Heart right ventricle (tissue), 16 donors: ENCODE measurements at regions of chr3 and their contacts with region 1.

Region 1: DNA sequence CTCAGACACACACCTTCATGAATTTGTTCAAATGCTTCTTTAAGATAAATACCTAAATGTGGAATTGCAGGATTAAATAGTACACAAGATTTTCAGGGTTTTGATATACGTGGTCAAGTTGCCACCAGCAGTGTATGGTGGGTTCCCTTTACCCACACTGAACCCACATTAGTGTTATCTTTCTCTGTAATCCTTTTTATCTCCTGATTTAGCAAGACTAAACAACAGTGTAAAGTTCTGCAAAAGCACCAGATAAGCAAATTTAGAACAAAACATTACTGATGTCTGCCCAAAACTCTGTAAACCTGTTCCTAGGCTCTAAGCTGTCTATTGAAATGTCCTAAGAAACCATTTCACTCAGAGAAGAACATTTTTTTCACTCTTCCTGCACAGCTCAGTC is 352.9 kb downstream of the FHIT start:
- DNase-seq: no peak
- ATAC-seq: no peak
- H3K4me3 ChIP-seq: no peak overlapping the region
- H3K27ac ChIP-seq: no peak overlapping the region
- H3K4me1 ChIP-seq: no peaks in the 10 kb centered on the region
- H3K27me3 ChIP-seq: no peaks in the 10 kb centered on the region
- CTCF ChIP-seq: no peak

Region 2: DNA sequence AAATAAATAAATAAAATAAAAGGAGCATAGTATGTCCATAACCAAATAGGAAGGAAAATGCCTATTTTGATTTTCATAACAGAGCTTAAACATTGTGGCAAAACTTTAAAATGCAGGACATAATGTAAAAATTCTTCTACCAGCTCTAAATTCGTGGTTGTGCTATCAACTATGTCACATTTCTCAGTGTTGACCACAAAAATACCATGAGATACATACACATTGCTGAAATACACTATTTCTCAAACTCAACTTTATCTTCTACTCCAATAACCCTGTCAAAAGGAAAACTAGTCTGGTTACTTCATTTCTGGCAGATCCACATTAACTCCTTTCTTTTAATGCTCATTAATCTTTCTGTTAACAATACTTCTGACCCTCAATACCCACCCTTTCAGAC is 170.3 kb before region 1 on chr3:
- intact Hi-C with region 1: no loop called
- DNase-seq: no peak
- ATAC-seq: no peak
- H3K4me3 ChIP-seq: no peak overlapping the region
- H3K27ac ChIP-seq: no peak overlapping the region
- H3K4me1 ChIP-seq: no peaks in the 10 kb centered on the region
- H3K27me3 ChIP-seq: no peaks in the 10 kb centered on the region
- CTCF ChIP-seq: no peak

Region 3: GRCh38 chr3:60932643-60933042 is 34.3 kb after region 1 on chr3:
- intact Hi-C with region 1: loop called in 1 of 10 experiments (anchors 2 kb)
- DNase-seq: no peak
- ATAC-seq: no peak
- H3K4me3 ChIP-seq: no peak overlapping the region
- H3K27ac ChIP-seq: no peak overlapping the region
- H3K4me1 ChIP-seq: no peaks in the 10 kb centered on the region
- H3K27me3 ChIP-seq: no peaks in the 10 kb centered on the region
- CTCF ChIP-seq: no peak